ENCODE measurements at regions of chr15 and their contacts with region 1.

Region 1: DNA sequence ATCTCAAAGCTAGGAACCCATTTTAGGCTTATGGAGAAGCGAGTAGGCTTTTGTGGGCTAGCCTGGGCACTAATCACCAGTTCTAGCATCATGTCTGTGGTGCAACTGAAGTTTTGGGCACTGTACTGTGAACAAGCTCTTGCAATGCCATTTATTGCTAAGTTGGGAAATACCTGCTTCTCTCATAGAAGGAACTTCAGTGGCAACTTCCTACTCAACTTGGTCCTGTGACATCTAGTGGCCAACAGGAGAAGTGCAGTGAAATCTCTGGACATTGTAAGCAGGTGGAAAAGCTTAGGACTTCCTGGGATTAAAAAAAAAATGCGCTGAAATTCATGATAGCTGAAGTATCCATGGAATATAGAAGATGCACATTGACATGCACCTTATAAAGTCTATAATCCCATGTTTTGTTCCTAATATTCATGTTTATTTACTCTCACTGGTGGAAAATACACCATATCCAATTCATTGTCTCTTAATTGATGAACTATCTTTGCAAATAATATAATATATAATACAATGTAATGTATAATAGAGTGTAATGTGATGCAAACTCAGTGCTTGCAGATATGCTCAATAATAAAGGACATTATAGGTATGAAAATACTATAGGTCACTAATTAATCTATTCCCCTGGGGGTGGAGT is 6.5 kb upstream of the ALDH1A3 start:
- DNase-seq: peak; percentile 73
- ATAC-seq: peak; percentile 80
- H3K4me3 ChIP-seq: no peak overlapping the region
- H3K4me3 Mint-ChIP-seq: no peak overlapping the region
- H3K27ac ChIP-seq: no peak overlapping the region
- H3K27ac Mint-ChIP-seq: no peak overlapping the region
- H3K4me1 ChIP-seq: no peaks in the 10 kb centered on the region
- H3K4me1 Mint-ChIP-seq: no peaks in the 10 kb centered on the region
- H3K27me3 ChIP-seq: peaks cover 0 to 25% (median 6%) of the 10 kb centered on the region in 4 experiments
- H3K27me3 Mint-ChIP-seq: peaks cover 30% of the 10 kb centered on the region
- CTCF ChIP-seq: peak; percentile 97

Region 2: GRCh38 chr15:100627789-100628395 is 245.3 kb before region 1 on chr15:
- CTCF ChIA-PET with region 1: interaction called, 15 read pairs
- POLR2A ChIA-PET with region 1: no interaction called
- intact Hi-C with region 1: loop called (anchors 1 kb)
- DNase-seq: peak; percentile 81
- ATAC-seq: peak; percentile 71
- H3K4me3 ChIP-seq: no peak overlapping the region
- H3K4me3 Mint-ChIP-seq: no peak overlapping the region
- H3K27ac ChIP-seq: no peak overlapping the region
- H3K27ac Mint-ChIP-seq: no peak overlapping the region
- H3K4me1 ChIP-seq: no peaks in the 10 kb centered on the region
- H3K4me1 Mint-ChIP-seq: peaks cover 2% of the 10 kb centered on the region
- H3K27me3 ChIP-seq: no peaks in the 10 kb centered on the region
- H3K27me3 Mint-ChIP-seq: no peaks in the 10 kb centered on the region
- CTCF ChIP-seq: peak; percentile 96

Region 3: GRCh38 chr15:101179341-101180153 is 306.4 kb after region 1 on chr15:
- CTCF ChIA-PET with region 1: no interaction called
- POLR2A ChIA-PET with region 1: no interaction called
- intact Hi-C with region 1: no loop called
- DNase-seq: no peak
- ATAC-seq: no peak
- H3K4me3 ChIP-seq: no peak overlapping the region
- H3K4me3 Mint-ChIP-seq: no peak overlapping the region
- H3K27ac ChIP-seq: no peak overlapping the region
- H3K27ac Mint-ChIP-seq: no peak overlapping the region
- H3K4me1 ChIP-seq: peaks cover 9 to 14% of the 10 kb centered on the region in 2 donors
- H3K4me1 Mint-ChIP-seq: peaks cover 20% of the 10 kb centered on the region
- H3K27me3 ChIP-seq: no peaks in the 10 kb centered on the region
- H3K27me3 Mint-ChIP-seq: no peaks in the 10 kb centered on the region
- CTCF ChIP-seq: no peak

Measured in B cell (primary cell).